ENCODE measurements at regions of chr3 and their contacts with region 1.

Region 1: GRCh38 chr3:42190701-42191462 is 75.1 kb downstream of the CCK start:
- DNase-seq: peak; percentile 75
- ATAC-seq: peak; percentile 74
- H3K4me3 Mint-ChIP-seq: no peak overlapping the region
- H3K27ac Mint-ChIP-seq: no peak overlapping the region
- H3K4me1 Mint-ChIP-seq: peaks cover 42% of the 10 kb centered on the region
- H3K27me3 Mint-ChIP-seq: no peaks in the 10 kb centered on the region

Region 2: GRCh38 chr3:42118762-42119361 is 72.0 kb before region 1 on chr3:
- CTCF ChIA-PET with region 1: interaction called, 82 read pairs
- DNase-seq: peak; percentile 53
- ATAC-seq: peak; percentile 83
- H3K4me3 Mint-ChIP-seq: no peak overlapping the region
- H3K27ac Mint-ChIP-seq: peak overlapping the region; percentile 43
- H3K4me1 Mint-ChIP-seq: peaks cover 28% of the 10 kb centered on the region
- H3K27me3 Mint-ChIP-seq: no peaks in the 10 kb centered on the region

Region 3: GRCh38 chr3:42159706-42160472 is 31.0 kb before region 1 on chr3:
- CTCF ChIA-PET with region 1: interaction called, 17 read pairs
- DNase-seq: peak; percentile 78
- ATAC-seq: peak; percentile 88
- H3K4me3 Mint-ChIP-seq: peak overlapping the region; percentile 45
- H3K27ac Mint-ChIP-seq: peak overlapping the region; percentile 66
- H3K4me1 Mint-ChIP-seq: peaks cover 42% of the 10 kb centered on the region
- H3K27me3 Mint-ChIP-seq: no peaks in the 10 kb centered on the region

Region 4: DNA sequence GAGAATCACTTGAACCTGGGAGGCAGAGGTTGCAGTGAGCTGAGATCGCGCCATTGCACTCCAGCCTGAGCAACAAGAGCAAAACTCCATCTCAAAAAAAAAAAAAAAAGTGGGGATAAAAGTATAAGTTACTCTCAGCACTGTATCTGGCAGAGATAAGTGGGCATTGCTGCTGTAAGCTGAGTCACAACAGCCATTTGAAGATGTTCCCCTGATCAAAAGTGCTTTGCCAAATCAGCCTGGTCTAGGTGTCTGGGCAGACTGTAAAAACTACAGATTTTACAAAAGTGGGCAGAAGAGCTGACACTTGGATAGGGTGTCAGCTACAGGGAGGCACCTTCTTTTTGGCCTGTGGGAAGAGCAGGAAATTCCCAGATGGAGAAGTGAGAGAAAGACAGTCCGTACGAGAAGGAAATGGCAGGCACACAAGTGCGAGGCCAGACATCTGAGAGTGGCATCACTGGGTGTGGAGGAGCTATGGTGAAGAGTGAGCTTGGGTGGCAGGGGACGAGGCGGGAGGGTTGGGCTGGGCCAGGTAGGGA is 21.2 kb before region 1 on chr3:
- CTCF ChIA-PET with region 1: interaction called, 57 read pairs
- DNase-seq: no peak
- ATAC-seq: no peak
- H3K4me3 Mint-ChIP-seq: no peak overlapping the region
- H3K27ac Mint-ChIP-seq: no peak overlapping the region
- H3K4me1 Mint-ChIP-seq: peaks cover 22% of the 10 kb centered on the region
- H3K27me3 Mint-ChIP-seq: no peaks in the 10 kb centered on the region

Region 5: DNA sequence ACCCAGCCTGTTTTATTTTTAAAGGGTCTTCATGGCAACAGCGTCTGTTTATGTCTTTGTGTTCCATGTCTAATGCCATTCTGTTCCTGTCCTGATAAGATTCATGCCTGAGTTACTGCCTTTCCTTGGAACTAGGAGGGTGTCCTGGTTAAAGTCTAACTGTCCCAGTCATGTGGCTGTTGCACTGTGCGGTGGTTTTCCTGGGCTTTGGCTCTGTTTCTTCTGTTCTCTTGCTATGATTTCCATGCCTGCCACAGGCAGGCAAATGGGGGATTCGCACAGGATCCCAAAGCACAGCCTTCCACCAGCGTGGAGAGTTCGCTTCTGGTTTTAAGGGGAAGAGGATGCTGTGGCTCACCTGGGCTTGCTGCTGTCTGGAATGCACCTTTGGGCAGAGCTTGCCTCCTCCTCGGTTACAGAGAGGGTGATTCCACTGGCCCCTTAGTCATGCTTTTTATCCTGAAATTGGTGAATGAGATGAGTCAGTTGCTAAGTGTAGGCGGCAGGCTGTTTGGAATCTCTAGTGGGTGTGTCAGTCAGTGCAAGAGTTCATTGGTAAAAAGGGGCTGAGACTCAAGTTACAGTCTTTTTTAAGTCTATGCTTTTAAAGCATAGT is 11.7 kb before region 1 on chr3:
- CTCF ChIA-PET with region 1: interaction called, 57 read pairs
- DNase-seq: no peak
- ATAC-seq: no peak
- H3K4me3 Mint-ChIP-seq: no peak overlapping the region
- H3K27ac Mint-ChIP-seq: no peak overlapping the region
- H3K4me1 Mint-ChIP-seq: peaks cover 8% of the 10 kb centered on the region
- H3K27me3 Mint-ChIP-seq: no peaks in the 10 kb centered on the region

Region 6: DNA sequence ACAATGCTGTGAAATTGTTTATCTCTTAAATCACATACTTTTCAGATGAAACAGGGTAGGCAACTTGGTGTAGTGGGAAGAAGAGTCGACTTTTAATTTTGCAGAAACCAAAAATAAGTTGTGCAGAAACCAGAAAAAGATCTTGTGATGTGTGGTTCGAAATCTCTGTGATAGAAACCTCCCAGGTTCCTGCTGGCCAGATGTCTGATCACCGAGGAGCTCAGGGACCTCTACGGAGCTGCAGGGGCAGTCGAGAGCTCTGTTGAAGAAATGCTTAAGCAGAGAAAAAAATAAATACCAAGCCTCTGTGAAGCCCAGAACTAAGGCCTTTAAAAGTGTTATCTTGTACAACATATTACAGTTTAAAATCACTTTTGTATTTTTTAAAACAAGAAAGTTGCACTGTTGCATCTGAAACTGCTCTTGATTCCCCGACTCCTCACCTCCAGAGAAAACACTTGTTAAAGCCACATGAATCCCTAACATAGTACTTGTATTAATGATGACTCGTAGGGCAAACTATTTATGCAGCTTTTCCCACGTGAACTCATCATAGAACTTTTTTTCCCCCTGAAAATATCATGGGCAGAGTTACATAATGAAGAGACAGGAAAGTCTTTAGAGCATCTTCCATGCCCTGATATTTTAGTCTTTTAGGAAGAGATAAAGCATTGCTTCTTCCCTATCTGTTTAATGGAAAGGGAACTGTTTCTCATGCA is 23.8 kb after region 1 on chr3:
- CTCF ChIA-PET with region 1: interaction called, 28 read pairs
- DNase-seq: no peak
- ATAC-seq: no peak
- H3K4me3 Mint-ChIP-seq: no peak overlapping the region
- H3K27ac Mint-ChIP-seq: peak overlapping the region; percentile 25
- H3K4me1 Mint-ChIP-seq: peaks cover 51% of the 10 kb centered on the region
- H3K27me3 Mint-ChIP-seq: no peaks in the 10 kb centered on the region

Region 7: GRCh38 chr3:42236611-42237010 is 45.7 kb after region 1 on chr3:
- CTCF ChIA-PET with region 1: no interaction called
- DNase-seq: no peak
- ATAC-seq: no peak
- H3K4me3 Mint-ChIP-seq: no peak overlapping the region
- H3K27ac Mint-ChIP-seq: no peak overlapping the region
- H3K4me1 Mint-ChIP-seq: no peaks in the 10 kb centered on the region
- H3K27me3 Mint-ChIP-seq: peaks cover 36% of the 10 kb centered on the region

Measured in activated CD8-positive, alpha-beta memory T cell treated with anti-CD3 and anti-CD28 coated beads, Interleukin-2, amount 10 ng/mL, durations not matched to agents 7 days and 5 days (primary cell).